Aorta (tissue), 5 donors: ENCODE measurements at regions of chr2 and their contacts with region 1.

Region 1: DNA sequence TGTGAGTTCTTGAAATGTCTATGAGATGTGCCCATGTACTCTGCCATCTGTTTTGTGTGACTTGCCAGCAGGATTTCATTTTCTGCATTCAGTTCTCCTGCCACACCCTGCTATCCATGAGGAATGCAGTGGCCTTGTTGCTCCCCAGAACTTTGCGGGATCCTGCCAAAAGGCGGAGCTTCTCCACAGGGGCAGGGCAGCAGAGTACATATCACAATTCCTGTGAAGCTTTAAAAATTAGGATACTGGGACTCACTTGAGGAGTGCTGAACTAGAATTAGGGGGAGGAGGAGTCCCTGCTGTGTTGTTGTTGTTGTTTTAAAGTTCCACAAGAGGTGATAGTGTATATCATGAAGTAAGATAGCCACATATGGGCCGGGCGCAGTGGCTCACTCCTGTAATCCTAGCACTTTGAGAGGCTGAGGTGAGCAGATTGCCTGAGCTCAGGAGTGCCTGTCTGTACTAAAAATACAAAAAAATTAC is 76.4 kb downstream of the TANC1 start:
- DNase-seq: no peak
- ATAC-seq: peak; percentile 44
- H3K4me3 ChIP-seq: no peak overlapping the region
- H3K27ac ChIP-seq: peak overlapping the region in 1 of 2 donors; percentile 38
- H3K4me1 ChIP-seq: peaks cover 7 to 8% of the 10 kb centered on the region in 2 donors
- H3K27me3 ChIP-seq: no peaks in the 10 kb centered on the region

Region 2: DNA sequence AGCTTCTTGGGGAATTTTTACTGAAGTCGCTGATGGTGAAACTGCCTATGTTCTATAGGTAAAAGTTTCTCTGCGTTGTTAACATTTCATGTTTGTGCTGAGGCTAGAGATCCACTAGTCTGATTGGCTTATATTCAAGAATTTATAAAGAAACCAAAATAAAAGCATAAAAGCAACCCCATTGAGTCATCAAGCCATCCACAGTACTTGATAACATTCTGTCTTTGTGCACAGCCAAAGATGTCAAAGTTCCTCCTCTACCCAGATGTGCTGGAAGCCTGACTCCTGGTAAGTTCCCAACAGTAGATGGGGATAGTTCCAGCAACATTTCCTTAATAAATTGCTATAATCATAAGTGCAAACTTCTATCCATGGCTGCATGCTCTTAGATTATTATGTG is 31.4 kb after region 1 on chr2:
- intact Hi-C with region 1: no loop called
- DNase-seq: no peak
- ATAC-seq: peak; percentile 16
- H3K4me3 ChIP-seq: no peak overlapping the region
- H3K27ac ChIP-seq: no peak overlapping the region
- H3K4me1 ChIP-seq: peaks cover 2 to 8% of the 10 kb centered on the region in 2 donors
- H3K27me3 ChIP-seq: no peaks in the 10 kb centered on the region

Region 3: DNA sequence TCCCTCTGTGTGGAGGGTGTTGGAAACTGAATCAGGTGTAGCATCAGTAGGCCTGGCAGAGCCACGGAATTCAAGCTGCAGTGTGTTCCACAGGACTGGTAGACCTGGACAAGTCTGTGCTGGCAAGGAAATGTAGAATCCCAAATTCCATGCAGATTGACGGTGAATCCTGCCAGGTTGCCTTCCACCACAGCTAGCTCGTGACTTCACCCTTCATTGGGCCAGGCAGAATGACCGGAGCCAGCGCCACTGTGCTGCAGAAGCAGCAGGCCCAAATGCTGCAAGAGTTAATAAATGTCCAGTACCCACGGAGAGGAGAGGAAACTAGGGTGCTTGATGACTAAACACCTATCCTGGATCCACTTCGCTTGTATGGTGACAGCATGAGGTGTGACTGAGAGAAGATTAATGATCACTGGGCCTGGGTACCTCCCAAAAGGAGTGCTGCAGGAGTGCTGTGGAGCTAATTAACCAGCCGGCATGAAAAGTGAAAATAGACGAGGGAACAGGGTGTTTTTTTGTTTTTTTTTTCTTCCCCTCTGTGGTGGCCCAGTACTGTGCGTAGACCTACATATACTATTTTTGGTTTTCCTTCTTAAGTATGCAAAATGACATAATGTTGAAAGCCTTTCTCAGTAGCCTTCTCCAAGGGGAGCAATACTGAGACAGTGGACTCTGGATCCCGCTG is 45.8 kb after region 1 on chr2:
- intact Hi-C with region 1: loop called in 1 of 2 experiments (anchors 10 kb)
- DNase-seq: no peak
- ATAC-seq: peak; percentile 68
- H3K4me3 ChIP-seq: no peak overlapping the region
- H3K27ac ChIP-seq: peak overlapping the region; percentile 87 to 99
- H3K4me1 ChIP-seq: peaks cover 4 to 13% of the 10 kb centered on the region in 2 donors
- H3K27me3 ChIP-seq: no peaks in the 10 kb centered on the region

Region 4: GRCh38 chr2:159409116-159409800 is 364.4 kb after region 1 on chr2:
- intact Hi-C with region 1: no loop called
- DNase-seq: no peak
- ATAC-seq: no peak
- H3K4me3 ChIP-seq: no peak overlapping the region
- H3K27ac ChIP-seq: no peak overlapping the region
- H3K4me1 ChIP-seq: no peaks in the 10 kb centered on the region
- H3K27me3 ChIP-seq: no peaks in the 10 kb centered on the region